Activated T-helper 2 cell treated with anti-CD3 and anti-CD28 coated beads, Interferon-gamma antibody, Interleukin-2, Interleukin-4, amounts not matched to agents 10 μg/mL and 5 μg/mL and 100 μg/mL, durations not matched to agents 14 hours and 24 hours and 36 hours (primary cell): ENCODE measurements at regions of chr7 and their contacts with region 1.

Region 1: DNA sequence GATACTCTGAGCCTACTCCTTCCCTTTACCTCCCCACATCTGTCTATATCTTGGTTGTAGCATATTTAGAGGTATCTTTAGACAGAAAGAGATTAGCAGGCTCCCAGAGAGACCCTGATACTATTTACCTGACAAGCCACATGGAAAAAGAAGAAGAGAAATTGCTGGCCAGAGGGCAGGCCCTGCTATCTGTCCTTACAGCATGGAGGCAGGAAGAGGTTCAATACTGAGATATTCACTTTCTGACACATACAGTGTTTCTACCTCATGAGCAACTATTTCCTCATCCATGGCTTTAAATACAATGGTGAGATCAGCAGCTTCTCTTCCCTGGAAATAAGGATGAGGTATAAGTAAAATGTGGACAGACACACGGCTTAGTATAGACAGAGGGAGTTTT is 33.9 kb upstream of the TSPAN13 start:
- DNase-seq: no peak
- H3K4me3 Mint-ChIP-seq: no peak overlapping the region
- H3K27ac Mint-ChIP-seq: no peak overlapping the region
- H3K4me1 Mint-ChIP-seq: peaks cover 10% of the 10 kb centered on the region
- H3K27me3 Mint-ChIP-seq: no peaks in the 10 kb centered on the region

Region 2: GRCh38 chr7:16657656-16658279 is 61.9 kb before region 1 on chr7:
- intact Hi-C with region 1: no loop called
- DNase-seq: no peak
- H3K4me3 Mint-ChIP-seq: no peak overlapping the region
- H3K27ac Mint-ChIP-seq: no peak overlapping the region
- H3K4me1 Mint-ChIP-seq: peaks cover 29% of the 10 kb centered on the region
- H3K27me3 Mint-ChIP-seq: no peaks in the 10 kb centered on the region

Region 3: DNA sequence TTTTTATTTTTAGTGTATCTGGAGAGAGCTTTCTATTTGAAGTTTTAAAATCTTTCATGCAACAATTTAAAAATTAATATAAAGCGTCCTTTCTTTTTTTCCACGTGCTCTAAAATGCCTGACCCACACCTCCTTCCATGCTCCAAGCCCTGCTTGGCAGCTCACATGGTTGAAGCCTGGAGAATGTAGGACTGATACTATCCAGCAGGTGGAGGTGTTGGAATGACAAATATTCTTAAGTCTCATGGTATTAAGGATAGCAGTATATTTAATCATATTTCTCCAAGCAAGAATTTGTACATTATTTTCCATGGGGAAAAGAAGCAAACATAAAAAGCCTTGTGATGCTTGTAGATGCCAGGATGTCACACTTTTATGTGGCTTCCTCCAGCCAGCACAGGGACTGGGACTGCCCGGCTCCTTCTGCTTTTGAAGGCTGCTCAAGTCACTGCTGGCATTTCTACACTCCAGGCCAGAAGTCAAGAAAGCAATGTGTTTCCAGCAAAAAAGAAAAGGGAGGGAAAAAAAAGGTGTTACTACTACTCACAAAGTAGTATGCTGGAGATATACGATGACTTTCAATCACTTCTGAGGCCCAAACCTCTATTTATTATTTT is 24.0 kb before region 1 on chr7:
- intact Hi-C with region 1: no loop called
- DNase-seq: no peak
- H3K4me3 Mint-ChIP-seq: no peak overlapping the region
- H3K27ac Mint-ChIP-seq: no peak overlapping the region
- H3K4me1 Mint-ChIP-seq: peaks cover 5% of the 10 kb centered on the region
- H3K27me3 Mint-ChIP-seq: no peaks in the 10 kb centered on the region

Region 4: DNA sequence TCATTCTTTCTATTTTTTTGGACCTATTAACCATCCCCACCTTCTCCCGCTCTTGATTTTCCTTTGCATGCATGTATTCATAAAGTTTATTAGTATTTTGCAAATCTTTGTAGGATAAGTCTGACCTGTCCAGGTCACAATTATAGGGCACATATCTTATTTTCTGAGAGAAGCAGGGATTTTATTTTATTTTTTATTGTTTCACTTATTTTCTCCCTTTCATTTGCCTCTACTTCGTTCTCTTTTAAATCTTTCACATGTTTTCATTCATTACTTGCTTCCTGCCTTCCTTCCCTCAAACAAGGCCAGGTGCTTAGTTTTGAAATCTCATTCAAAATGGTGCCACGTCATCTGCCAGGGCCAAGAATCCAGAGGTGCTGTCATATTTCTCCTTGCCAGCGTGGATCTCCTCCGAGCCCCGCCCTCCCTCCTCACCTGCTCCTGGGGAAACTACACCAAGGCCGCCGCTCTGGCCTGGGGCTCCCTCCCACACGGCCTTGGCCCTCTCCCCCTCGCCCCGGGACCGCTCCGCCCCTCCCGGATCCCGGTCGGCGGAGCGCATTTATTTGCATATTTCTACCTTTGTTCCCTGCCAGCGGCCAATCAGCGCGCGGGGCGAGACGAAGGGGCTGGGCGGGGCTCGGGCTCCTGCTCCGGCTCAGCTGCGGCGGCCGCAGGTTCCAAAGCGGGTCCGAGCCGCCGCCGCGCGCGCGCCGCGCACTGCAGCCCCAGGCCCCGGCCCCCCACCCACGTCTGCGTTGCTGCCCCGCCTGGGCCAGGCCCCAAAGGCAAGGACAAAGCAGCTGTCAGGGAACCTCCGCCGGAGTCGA is 33.6 kb after region 1 on chr7 and contains the start of gene TSPAN13:
- intact Hi-C with region 1: loop called (anchors 5 kb)
- DNase-seq: peak; percentile 67
- H3K4me3 Mint-ChIP-seq: peak within 1 kb of the TSS; percentile 83
- H3K27ac Mint-ChIP-seq: no peak within 1 kb of the TSS
- H3K4me1 Mint-ChIP-seq: peaks cover 21% of the 10 kb centered on the region
- H3K27me3 Mint-ChIP-seq: peaks cover 33% of the 10 kb centered on the region
- total RNA-seq, gene TSPAN13: 1.3 and 2.0 TPM in 2 replicates